Dendritic cell treated with granulocyte-macrophage colony-stimulating factor and Interleukin-4, amounts not matched to agents 40 ng/mL and 50 ng/mL, for 4 days (primary cell): ENCODE measurements at regions of chr9 and their contacts with region 1.

Region 1: DNA sequence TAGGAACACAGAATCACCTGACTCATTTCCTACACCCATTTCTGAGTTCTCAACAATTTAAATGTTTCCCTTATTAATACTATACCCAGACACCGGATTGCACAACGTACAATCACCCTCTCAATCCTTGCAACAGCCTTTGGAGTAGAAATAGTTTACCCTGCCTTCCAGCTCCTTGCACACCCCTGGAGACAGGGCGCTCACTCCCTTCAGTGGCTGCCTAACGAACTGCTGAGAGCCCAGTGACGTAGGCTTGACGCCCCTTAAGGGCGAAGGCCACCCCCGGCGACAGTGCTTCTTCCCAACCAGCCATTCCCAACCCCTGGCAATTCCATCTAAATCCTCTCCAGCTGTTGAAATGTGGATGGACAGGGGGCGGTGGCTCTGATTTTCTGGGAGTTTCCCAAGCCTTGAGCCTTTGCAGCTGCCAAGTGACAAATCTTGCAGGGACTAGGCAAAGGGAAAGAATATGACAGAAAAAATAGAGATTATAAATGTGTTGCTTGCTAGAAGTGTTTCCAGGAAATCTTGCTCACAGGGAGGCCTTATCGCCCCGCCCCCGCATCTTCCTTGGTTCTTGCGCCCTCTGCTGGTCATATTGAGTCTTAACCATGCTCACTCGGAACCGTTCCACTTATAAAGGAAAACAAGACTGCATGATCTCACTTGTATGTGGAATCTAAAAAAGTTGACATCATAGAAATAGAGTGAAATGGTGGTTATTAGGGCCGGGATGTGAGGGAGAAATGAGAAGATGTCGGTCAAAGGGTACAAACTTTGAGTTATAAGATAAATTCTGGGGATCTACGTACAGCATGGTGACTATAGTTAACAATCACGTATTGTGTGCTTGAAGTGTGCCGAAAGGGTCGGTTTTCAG is 7.6 kb upstream of the BARX1 start:
- H3K4me3 Mint-ChIP-seq: no peak overlapping the region
- H3K27ac Mint-ChIP-seq: no peak overlapping the region
- H3K4me1 Mint-ChIP-seq: peaks cover 33% of the 10 kb centered on the region
- H3K27me3 Mint-ChIP-seq: peaks cover 62% of the 10 kb centered on the region

Region 2: DNA sequence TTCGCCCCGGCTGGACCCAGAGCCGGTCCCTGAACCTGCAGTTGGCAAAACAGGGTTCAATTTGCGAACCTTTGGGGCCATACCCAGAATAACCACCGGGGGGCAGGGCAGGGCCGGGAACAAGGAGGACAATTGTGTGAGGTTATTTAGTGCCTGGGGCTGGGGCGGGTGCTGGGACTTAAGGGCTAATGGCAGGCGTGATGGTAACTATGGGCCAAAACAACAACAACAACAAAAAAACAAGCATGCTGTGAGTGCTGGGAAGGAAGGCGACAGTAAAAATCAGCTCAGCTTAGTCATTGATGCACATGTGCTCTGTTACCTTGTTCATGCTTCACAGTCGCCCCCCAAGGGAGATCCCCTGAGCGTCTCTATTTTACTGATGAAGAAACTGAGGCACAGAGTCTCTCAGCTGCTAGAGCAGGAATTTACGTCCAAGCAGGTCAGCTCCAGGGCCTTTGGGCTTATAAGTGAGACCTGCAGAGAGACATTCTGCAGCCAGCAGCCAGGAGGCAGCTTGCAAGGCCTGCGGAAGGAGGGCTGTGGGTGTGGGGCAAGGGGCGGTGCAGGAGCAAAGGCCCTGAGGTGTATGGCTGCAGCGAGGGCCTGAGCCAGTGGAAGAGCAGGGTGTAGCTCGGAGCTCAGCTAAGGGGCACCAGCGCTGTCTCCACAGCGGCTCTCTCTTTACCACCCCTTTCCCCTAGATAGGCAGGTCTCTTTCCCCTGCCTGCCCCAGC is 280.4 kb before region 1 on chr9:
- intact Hi-C with region 1: loop called (anchors 1 kb)
- H3K4me3 Mint-ChIP-seq: no peak overlapping the region
- H3K27ac Mint-ChIP-seq: no peak overlapping the region
- H3K4me1 Mint-ChIP-seq: peaks cover 5% of the 10 kb centered on the region
- H3K27me3 Mint-ChIP-seq: peaks cover 9% of the 10 kb centered on the region

Region 3: DNA sequence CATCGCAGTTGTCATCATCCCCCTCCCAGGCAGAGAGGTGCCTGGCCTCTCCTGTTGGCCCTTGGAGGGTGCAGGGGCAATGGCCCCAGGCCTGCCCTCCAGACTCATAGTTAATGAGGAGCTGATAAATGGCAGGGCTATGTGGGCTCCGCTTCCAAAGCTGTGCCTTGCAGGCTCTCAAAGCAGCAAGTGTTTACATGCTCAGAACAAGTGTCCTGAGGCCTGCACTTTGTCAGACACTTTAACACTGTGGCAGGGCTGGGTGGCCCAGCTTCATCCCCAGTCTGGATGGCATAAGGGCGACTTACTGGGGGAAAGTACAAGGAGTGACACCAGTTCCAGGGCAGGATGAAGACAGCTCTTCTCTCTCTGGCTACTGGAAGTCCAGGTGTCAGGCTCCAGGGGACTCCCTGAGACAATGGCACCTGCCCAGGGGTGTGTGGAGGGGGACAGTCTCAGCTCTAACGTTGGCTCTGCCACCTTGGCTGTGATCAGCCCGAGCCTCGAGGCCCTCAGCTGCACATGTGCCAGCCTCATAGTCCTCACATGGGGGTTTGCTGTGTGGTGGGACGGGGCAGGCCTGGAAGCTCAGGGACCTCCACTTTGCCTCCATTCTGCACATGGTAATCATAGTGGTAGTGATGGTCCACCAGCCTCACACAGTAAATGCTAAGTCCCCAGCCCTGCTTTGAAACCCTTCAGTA is 161.1 kb before region 1 on chr9:
- intact Hi-C with region 1: no loop called
- H3K4me3 Mint-ChIP-seq: no peak overlapping the region
- H3K27ac Mint-ChIP-seq: no peak overlapping the region
- H3K4me1 Mint-ChIP-seq: no peaks in the 10 kb centered on the region
- H3K27me3 Mint-ChIP-seq: no peaks in the 10 kb centered on the region

Region 4: GRCh38 chr9:93827545-93828330 is 135.1 kb before region 1 on chr9:
- intact Hi-C with region 1: loop called (anchors 2 kb)
- H3K4me3 Mint-ChIP-seq: no peak overlapping the region
- H3K27ac Mint-ChIP-seq: no peak overlapping the region
- H3K4me1 Mint-ChIP-seq: no peaks in the 10 kb centered on the region
- H3K27me3 Mint-ChIP-seq: peaks cover 52% of the 10 kb centered on the region

Region 5: GRCh38 chr9:93984860-93985259 is 22.1 kb after region 1 on chr9:
- intact Hi-C with region 1: no loop called
- H3K4me3 Mint-ChIP-seq: no peak overlapping the region
- H3K27ac Mint-ChIP-seq: no peak overlapping the region
- H3K4me1 Mint-ChIP-seq: no peaks in the 10 kb centered on the region
- H3K27me3 Mint-ChIP-seq: peaks cover 20% of the 10 kb centered on the region

Region 6: GRCh38 chr9:94166237-94166963 is 203.6 kb after region 1 on chr9:
- intact Hi-C with region 1: loop called (anchors 5 kb)
- H3K4me3 Mint-ChIP-seq: peak overlapping the region; percentile 89
- H3K27ac Mint-ChIP-seq: peak overlapping the region; percentile 94
- H3K4me1 Mint-ChIP-seq: peaks cover 25% of the 10 kb centered on the region
- H3K27me3 Mint-ChIP-seq: no peaks in the 10 kb centered on the region